Activated T-helper 1 cell treated with anti-CD3 and anti-CD28 coated beads, Interleukin-12 subunit alpha, Interleukin-12 subunit beta, Interleukin-2, Interleukin-4 antibody, amounts not matched to agents 30 ng/mL and 10 ng/mL and 1 ng/mL, durations not matched to agents 14 hours and 24 hours and 36 hours (primary cell): ENCODE measurements at regions of chrX and their contacts with region 1.

Region 1: GRCh38 chrX:78945186-78945912 is at the start of gene P2RY10:
- DNase-seq: peak; percentile 6
- H3K4me3 Mint-ChIP-seq: peak within 1 kb of the TSS; percentile 98
- H3K27ac Mint-ChIP-seq: peak within 1 kb of the TSS; percentile 97
- H3K4me1 Mint-ChIP-seq: peaks cover 48% of the 10 kb centered on the region
- H3K27me3 Mint-ChIP-seq: no peaks in the 10 kb centered on the region
- total RNA-seq, gene P2RY10: 34.6 and 44.9 TPM in 2 replicates

Region 2: GRCh38 chrX:78366576-78366975 is 578.8 kb before region 1 on chrX:
- intact Hi-C with region 1: no loop called
- DNase-seq: no peak
- H3K4me3 Mint-ChIP-seq: no peak overlapping the region
- H3K27ac Mint-ChIP-seq: no peak overlapping the region
- H3K4me1 Mint-ChIP-seq: peaks cover 5% of the 10 kb centered on the region
- H3K27me3 Mint-ChIP-seq: no peaks in the 10 kb centered on the region

Region 3: GRCh38 chrX:78618987-78619386 is 326.4 kb before region 1 on chrX:
- intact Hi-C with region 1: no loop called
- DNase-seq: no peak
- H3K4me3 Mint-ChIP-seq: no peak overlapping the region
- H3K27ac Mint-ChIP-seq: no peak overlapping the region
- H3K4me1 Mint-ChIP-seq: no peaks in the 10 kb centered on the region
- H3K27me3 Mint-ChIP-seq: peaks cover 4% of the 10 kb centered on the region

Region 4: GRCh38 chrX:78653118-78653822 is 292.1 kb before region 1 on chrX:
- intact Hi-C with region 1: loop called (anchors 2 kb)
- DNase-seq: no peak
- H3K4me3 Mint-ChIP-seq: peak overlapping the region; percentile 55
- H3K27ac Mint-ChIP-seq: peak overlapping the region; percentile 49
- H3K4me1 Mint-ChIP-seq: peaks cover 38% of the 10 kb centered on the region
- H3K27me3 Mint-ChIP-seq: no peaks in the 10 kb centered on the region

Region 5: DNA sequence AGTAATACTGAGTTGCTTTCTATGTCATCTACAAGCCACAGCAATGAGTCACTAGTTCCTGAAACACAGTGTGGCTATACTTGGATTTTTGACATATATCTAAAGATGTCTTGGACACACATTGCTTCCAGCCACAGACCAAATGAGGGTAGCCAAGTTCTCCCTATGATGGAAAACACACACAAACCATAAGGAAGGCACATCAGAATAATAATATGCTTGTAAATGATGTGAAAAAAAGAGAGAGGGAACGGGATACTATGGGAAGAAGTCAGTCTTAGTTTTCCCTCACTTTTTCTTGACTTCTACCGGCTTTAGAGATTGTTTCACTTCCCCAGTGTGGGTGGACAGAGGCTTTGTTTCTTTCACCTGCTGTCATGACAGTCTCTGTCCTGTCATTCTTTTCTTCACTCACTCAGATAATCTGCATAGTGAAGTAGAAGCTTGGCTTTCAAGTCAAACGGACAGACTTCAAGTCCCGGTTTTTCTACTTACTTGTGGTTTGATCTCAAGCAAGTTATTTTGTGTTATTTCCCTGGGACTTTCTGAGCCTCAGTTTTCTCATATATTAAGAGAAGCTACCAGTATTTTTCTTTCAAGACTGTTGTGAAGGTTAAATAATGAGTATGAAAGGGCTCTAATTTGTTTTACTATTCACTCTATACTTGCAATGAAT is 34.6 kb after region 1 on chrX:
- intact Hi-C with region 1: loop called (anchors 1 kb)
- DNase-seq: no peak
- H3K4me3 Mint-ChIP-seq: peak overlapping the region; percentile 67
- H3K27ac Mint-ChIP-seq: peak overlapping the region; percentile 100
- H3K4me1 Mint-ChIP-seq: peaks cover 35% of the 10 kb centered on the region
- H3K27me3 Mint-ChIP-seq: no peaks in the 10 kb centered on the region

Region 6: GRCh38 chrX:79133904-79134303 is 188.6 kb after region 1 on chrX:
- intact Hi-C with region 1: no loop called
- DNase-seq: no peak
- H3K4me3 Mint-ChIP-seq: no peak overlapping the region
- H3K27ac Mint-ChIP-seq: peak overlapping the region; percentile 21
- H3K4me1 Mint-ChIP-seq: peaks cover 20% of the 10 kb centered on the region
- H3K27me3 Mint-ChIP-seq: no peaks in the 10 kb centered on the region

Region 7: GRCh38 chrX:79161655-79162054 is 216.3 kb after region 1 on chrX:
- intact Hi-C with region 1: loop called (anchors 2 kb)
- DNase-seq: peak; percentile 48
- H3K4me3 Mint-ChIP-seq: peak overlapping the region; percentile 89
- H3K27ac Mint-ChIP-seq: peak overlapping the region; percentile 99
- H3K4me1 Mint-ChIP-seq: peaks cover 53% of the 10 kb centered on the region
- H3K27me3 Mint-ChIP-seq: no peaks in the 10 kb centered on the region

Region 8: DNA sequence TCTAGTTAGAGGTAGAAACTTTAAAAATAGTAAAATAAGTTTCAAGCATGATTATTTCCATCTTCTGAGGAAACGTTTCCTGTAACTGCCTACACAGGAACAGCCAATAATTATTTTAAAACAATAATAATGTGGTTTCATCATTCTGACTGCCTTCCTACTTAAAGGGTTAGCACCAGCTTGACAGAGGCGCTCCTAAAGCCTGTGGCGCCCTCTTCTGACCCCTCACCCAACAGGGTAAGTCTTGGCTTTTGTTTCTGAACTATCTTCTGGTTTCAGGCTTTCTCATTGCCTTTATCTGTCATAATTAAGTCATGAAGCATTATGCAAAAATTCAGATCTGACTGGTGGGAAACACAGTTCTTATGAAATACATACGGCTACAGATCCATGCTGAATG is 325.1 kb after region 1 on chrX:
- intact Hi-C with region 1: loop called (anchors 2 kb)
- DNase-seq: peak; percentile 44
- H3K4me3 Mint-ChIP-seq: no peak overlapping the region
- H3K27ac Mint-ChIP-seq: no peak overlapping the region
- H3K4me1 Mint-ChIP-seq: peaks cover 33% of the 10 kb centered on the region
- H3K27me3 Mint-ChIP-seq: no peaks in the 10 kb centered on the region